HAP-1 (cell line): ENCODE measurements at regions of chr3 and their contacts with region 1.

Region 1: DNA sequence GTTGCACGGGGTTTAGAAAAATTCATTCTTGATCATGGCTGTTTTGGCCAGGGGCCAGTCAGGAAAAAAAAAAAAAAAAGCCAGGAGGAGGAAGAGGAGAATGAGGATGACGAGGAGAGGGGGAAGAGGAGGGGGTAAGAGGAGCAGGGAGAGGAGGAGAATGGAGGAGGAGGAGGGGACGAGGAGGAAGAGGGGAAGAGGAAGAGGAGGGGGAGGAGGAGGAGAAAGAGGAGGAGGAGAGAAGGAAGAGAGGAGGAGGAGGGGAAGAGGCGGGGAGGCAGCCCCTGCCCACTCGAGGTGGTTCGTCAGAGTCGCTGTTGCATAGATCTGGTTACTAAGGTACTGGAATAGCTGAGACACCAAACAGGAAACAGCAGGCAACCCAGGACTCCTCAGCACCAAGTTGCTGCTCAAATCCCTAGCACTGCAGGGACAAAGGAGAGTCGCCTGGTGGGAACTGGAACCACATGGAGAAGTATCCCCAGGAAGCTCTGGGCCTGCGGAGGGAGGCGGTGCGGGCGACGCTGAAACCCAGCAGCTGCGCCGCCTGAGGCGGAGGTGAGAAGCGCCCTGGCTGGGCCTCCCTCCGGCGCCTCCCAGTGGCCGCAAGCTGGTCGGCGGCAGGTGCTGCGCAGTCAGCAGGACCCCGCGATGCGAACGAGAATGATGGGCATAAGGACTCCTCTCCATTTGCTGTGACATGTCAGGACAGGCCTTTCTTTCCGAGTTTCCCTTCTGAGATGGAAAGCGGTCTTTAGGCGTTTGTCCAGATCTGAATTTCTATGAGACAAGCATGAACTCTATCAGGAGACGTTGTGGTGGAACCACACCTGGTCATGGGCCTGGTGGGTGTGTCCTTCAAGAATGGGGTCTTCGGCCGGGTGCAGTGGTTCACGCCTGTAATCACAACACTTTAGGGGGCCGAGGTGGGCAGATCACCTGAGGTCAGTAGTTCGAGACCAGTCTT is 17.5 kb downstream of the FAM240A start:
- DNase-seq: peak; percentile 90 to 94
- H3K4me3 ChIP-seq: no peak overlapping the region
- H3K4me1 ChIP-seq: peaks cover 19% of the 10 kb centered on the region
- H3K27me3 ChIP-seq: no peaks in the 10 kb centered on the region

Region 2: GRCh38 chr3:46488735-46489361 is 141.0 kb before region 1 on chr3:
- in situ Hi-C with region 1: loop called (anchors 5 kb)
- DNase-seq: peak; percentile 90 to 99
- H3K4me3 ChIP-seq: no peak overlapping the region
- H3K4me1 ChIP-seq: peaks cover 4% of the 10 kb centered on the region
- H3K27me3 ChIP-seq: no peaks in the 10 kb centered on the region